CD8-positive, alpha-beta memory T cell (primary cell): ENCODE measurements at regions of chr7 and their contacts with region 1.

Region 1: DNA sequence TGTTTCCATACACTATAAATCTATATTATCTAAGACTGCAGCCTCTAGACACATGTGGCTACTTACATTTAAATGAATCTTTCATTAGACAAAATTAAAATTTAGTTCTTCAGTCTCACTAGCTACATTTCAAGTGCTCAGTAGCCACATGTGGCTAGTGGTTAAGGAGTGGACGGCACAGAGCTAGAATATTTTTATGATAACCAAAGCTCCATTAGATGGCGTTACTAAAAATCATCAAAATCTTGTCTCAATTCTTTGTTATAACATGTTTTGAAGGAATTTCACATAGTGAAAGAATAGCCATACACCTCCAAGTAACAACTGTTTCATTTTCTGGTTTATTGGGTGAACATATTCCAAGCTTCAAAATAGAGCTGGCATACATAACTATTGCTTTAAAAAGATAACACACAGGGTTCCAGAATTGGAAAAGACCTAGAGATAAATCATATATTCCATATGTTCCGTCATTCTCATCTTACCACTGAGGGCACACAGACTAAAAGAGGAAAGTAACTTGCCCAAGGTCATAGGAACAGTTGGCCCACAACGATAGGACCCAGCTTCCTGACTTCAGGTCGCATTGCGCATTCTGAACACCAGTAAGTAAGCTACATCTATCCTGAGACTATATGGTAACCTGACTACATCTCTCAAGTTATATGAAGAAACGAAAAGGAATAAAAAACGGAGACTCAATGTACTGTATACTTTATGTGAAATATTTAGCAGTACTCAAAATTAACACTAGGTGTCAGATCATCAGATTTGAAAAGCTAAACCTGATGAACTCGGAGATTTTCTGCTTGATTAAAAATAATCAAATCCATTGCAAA is 66.6 kb downstream of the CAV1 start:
- DNase-seq: peak in 1 of 5 donors; percentile 3
- H3K4me3 ChIP-seq: no peak overlapping the region
- H3K4me3 Mint-ChIP-seq: peak overlapping the region in 2 of 7 donors; percentile 20 to 36
- H3K27ac ChIP-seq: no peak overlapping the region
- H3K27ac Mint-ChIP-seq: no peak overlapping the region
- H3K4me1 ChIP-seq: no peaks in the 10 kb centered on the region
- H3K4me1 Mint-ChIP-seq: peaks cover 11 to 20% (median 18%) of the 10 kb centered on the region in 3 donors
- H3K27me3 ChIP-seq: peaks cover 3% of the 10 kb centered on the region
- H3K27me3 Mint-ChIP-seq: peaks cover 18 to 45% of the 10 kb centered on the region in 2 donors

Region 2: DNA sequence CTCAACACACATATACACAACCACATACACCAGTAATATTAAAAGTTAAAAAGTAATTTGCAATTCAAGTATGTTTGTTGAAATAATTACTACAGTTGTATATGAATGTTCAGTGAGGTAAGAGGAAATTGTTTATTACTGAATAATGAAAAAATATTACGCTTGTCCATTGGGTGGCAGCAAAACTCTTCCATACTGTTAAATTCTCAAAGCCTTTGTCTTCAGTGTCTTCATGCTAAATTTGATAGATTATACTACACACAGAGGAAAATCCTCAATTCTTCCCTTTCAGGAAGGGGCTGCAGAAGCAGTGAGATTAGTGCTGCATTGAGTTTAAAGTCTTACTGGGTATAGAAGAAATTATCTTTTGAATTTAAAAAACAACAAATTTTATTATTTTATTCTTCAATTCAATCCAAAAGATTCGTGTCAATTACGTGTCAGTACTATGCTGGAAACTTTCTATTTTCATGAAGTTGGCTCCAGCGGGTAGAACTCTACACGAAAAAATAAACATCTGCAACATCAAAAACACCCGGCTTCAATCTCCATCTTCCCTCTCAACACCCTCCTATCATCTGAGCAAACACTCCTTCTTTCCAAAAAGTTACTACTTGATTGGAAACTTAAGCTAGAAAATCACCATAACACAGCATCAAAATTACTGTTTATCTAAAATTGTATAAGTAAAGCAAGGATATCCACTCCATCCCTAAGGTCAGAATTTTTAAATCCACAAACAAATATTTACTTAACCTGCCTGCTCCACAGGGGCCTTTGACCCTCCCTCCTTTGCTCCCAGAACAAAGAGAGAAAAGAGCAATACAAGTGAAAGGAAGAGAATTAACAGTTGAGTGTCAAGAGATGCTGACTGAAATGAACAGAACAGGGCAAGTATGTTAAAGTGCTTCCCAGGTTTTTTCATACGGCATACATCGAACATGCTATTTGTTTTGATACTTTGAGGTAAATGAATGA is 418.1 kb before region 1 on chr7:
- CTCF ChIA-PET with region 1: interaction called, 12 read pairs
- POLR2A ChIA-PET with region 1: no interaction called
- DNase-seq: peak in 3 of 5 donors; percentile 4 to 52 (median 45)
- H3K4me3 ChIP-seq: no peak overlapping the region
- H3K4me3 Mint-ChIP-seq: no peak overlapping the region
- H3K27ac ChIP-seq: no peak overlapping the region
- H3K27ac Mint-ChIP-seq: no peak overlapping the region
- H3K4me1 ChIP-seq: no peaks in the 10 kb centered on the region
- H3K4me1 Mint-ChIP-seq: no peaks in the 10 kb centered on the region
- H3K27me3 ChIP-seq: no peaks in the 10 kb centered on the region
- H3K27me3 Mint-ChIP-seq: peaks cover 6 to 9% of the 10 kb centered on the region in 2 donors

Region 3: DNA sequence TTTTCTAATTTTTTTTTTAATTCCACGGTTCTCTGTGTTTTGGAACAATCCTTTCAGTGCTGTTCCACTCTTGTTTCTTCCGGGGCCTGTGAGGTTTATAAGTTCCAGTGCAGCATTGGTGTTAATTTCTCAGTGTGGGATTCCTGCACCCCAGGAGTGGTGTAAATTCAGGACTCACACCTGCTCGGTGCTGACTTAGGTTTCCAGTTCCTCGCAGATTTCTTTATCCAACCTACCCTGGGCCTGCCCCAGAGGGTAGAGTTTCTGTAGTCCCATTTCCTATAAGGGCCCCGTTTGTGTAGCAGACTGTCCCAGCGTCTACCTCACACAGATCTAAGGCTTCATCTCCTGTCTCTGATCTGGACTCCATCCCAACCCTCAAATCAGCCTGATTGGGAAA is 53.2 kb after region 1 on chr7:
- CTCF ChIA-PET with region 1: no interaction called
- POLR2A ChIA-PET with region 1: no interaction called
- DNase-seq: no peak
- H3K4me3 ChIP-seq: no peak overlapping the region
- H3K4me3 Mint-ChIP-seq: no peak overlapping the region
- H3K27ac ChIP-seq: no peak overlapping the region
- H3K27ac Mint-ChIP-seq: no peak overlapping the region
- H3K4me1 ChIP-seq: no peaks in the 10 kb centered on the region
- H3K4me1 Mint-ChIP-seq: no peaks in the 10 kb centered on the region
- H3K27me3 ChIP-seq: no peaks in the 10 kb centered on the region
- H3K27me3 Mint-ChIP-seq: peaks cover 0 to 22% of the 10 kb centered on the region in 2 donors

Region 4: GRCh38 chr7:116999311-116999710 is 407.9 kb after region 1 on chr7:
- CTCF ChIA-PET with region 1: no interaction called
- POLR2A ChIA-PET with region 1: no interaction called
- DNase-seq: no peak
- H3K4me3 ChIP-seq: no peak overlapping the region
- H3K4me3 Mint-ChIP-seq: no peak overlapping the region
- H3K27ac ChIP-seq: no peak overlapping the region
- H3K27ac Mint-ChIP-seq: no peak overlapping the region
- H3K4me1 ChIP-seq: no peaks in the 10 kb centered on the region
- H3K4me1 Mint-ChIP-seq: no peaks in the 10 kb centered on the region
- H3K27me3 ChIP-seq: no peaks in the 10 kb centered on the region
- H3K27me3 Mint-ChIP-seq: no peaks in the 10 kb centered on the region